ENCODE measurements at regions of chr4 and their contacts with region 1.

Region 1: GRCh38 chr4:76087007-76087769 is 12.7 kb downstream of the ART3 start:
- DNase-seq: peak; percentile 83
- H3K4me3 Mint-ChIP-seq: no peak overlapping the region
- H3K27ac Mint-ChIP-seq: peak overlapping the region; percentile 42
- H3K4me1 Mint-ChIP-seq: peaks cover 21% of the 10 kb centered on the region
- H3K27me3 Mint-ChIP-seq: no peaks in the 10 kb centered on the region
- CTCF ChIP-seq: peak; percentile 35

Region 2: GRCh38 chr4:75989846-75990528 is 97.2 kb before region 1 on chr4:
- CTCF ChIA-PET with region 1: interaction called, 128 read pairs
- POLR2A ChIA-PET with region 1: interaction called, 12 read pairs
- intact Hi-C with region 1: loop called (anchors 1 kb)
- DNase-seq: peak; percentile 4
- H3K4me3 Mint-ChIP-seq: peak overlapping the region; percentile 83
- H3K27ac Mint-ChIP-seq: peak overlapping the region; percentile 68
- H3K4me1 Mint-ChIP-seq: peaks cover 20% of the 10 kb centered on the region
- H3K27me3 Mint-ChIP-seq: peaks cover 7% of the 10 kb centered on the region
- CTCF ChIP-seq: no peak

Region 3: GRCh38 chr4:76061982-76062381 is 25.2 kb before region 1 on chr4:
- CTCF ChIA-PET with region 1: interaction called, 24 read pairs
- POLR2A ChIA-PET with region 1: interaction called, 6 read pairs
- intact Hi-C with region 1: loop called (anchors 2 kb)
- DNase-seq: no peak
- H3K4me3 Mint-ChIP-seq: no peak overlapping the region
- H3K27ac Mint-ChIP-seq: no peak overlapping the region
- H3K4me1 Mint-ChIP-seq: peaks cover 26% of the 10 kb centered on the region
- H3K27me3 Mint-ChIP-seq: no peaks in the 10 kb centered on the region
- CTCF ChIP-seq: no peak

Region 4: GRCh38 chr4:76074468-76074867 is 12.7 kb before region 1 on chr4 and contains the start of gene ART3:
- CTCF ChIA-PET with region 1: interaction called, 10 read pairs
- POLR2A ChIA-PET with region 1: interaction called, 12 read pairs
- intact Hi-C with region 1: no loop called
- DNase-seq: no peak
- H3K4me3 Mint-ChIP-seq: no peak within 1 kb of the TSS
- H3K27ac Mint-ChIP-seq: no peak within 1 kb of the TSS
- H3K4me1 Mint-ChIP-seq: no peaks in the 10 kb centered on the region
- H3K27me3 Mint-ChIP-seq: no peaks in the 10 kb centered on the region
- CTCF ChIP-seq: no peak
- total RNA-seq, gene ART3: 0.83 TPM in 1 of 2 replicates, not detected in the other

Region 5: DNA sequence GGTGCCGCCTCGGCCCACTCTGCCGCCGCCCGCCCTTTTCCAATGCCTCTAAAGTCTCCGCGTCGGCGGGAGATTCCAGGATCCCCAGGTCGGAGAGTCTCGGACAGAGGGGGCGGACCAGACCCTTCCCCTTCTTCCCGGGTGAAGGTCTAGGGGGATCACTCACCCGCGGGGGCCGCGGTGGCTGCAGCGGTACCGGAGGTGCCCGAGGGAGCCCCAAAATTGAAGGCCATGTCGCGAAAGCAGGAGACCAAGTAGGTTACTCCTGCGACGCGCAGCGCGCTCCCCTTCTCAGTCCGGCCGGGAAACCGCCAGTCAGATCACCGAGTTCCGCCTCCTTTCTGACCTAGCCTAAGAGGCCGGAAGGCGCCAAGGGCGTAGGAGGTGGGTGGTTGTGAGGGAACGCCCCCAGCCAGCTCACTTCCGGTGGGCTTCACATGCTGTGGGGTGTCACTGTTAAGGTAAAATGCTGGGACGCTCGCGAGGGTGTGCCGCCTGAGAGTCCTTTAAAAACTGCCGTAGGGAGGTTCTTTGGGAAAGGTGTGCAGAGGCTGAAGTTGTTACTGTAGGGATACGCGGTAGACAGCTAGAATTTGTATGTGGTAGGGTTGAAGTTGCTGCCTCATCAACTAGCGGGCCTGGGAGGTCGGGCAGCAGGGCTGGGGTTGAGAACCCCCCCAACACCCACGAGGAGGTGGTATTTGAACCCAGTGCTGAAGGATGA is 61.1 kb after region 1 on chr4 and contains the start of gene NUP54:
- CTCF ChIA-PET with region 1: interaction called, 3 read pairs
- POLR2A ChIA-PET with region 1: interaction called, 60 read pairs
- intact Hi-C with region 1: no loop called
- DNase-seq: peak; percentile 94
- H3K4me3 Mint-ChIP-seq: peak within 1 kb of the TSS; percentile 98
- H3K27ac Mint-ChIP-seq: peak within 1 kb of the TSS; percentile 98
- H3K4me1 Mint-ChIP-seq: peaks cover 12% of the 10 kb centered on the region
- H3K27me3 Mint-ChIP-seq: no peaks in the 10 kb centered on the region
- CTCF ChIP-seq: no peak
- total RNA-seq, gene NUP54: 46.9 and 51.5 TPM in 2 replicates